ENCODE measurements at regions of chr1 and their contacts with region 1.

Region 1: DNA sequence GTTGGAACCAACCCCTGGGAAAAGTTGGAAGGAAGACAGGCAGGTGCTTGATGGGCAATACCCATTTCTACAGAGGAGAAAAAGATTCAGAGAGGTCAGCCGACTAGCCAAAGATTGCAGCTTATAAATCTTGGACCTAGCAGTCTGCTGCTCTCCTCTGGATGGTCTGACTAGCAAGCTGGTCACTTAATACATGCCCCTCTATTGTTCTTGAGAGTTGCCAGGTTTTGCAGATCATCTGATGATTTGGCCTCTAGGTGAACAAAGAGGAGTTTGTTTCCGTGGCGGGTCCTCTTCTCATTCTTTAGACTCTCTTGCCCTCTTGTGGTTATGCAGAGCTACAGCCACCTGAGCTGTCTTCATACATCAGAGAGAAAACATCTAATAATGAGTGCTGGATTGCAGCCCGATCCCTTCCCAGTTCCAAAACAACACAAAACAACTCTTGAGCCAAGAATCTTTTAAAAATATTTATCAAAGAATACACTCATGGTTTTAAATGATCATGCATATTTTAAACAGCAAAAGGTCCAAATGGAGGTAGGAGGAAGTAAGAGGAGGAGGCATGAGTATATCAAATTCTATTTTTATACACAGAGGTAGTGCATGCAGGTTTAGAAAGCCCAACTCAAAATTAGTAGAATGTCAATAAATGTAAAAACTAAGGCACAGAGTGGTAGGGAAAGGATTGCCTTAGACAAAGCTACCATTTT is 115.7 kb downstream of the SLC30A10 start:
- DNase-seq: no peak
- H3K4me3 Mint-ChIP-seq: no peak overlapping the region
- H3K27ac Mint-ChIP-seq: no peak overlapping the region
- H3K4me1 Mint-ChIP-seq: no peaks in the 10 kb centered on the region
- H3K27me3 Mint-ChIP-seq: peaks cover 8% of the 10 kb centered on the region

Region 2: DNA sequence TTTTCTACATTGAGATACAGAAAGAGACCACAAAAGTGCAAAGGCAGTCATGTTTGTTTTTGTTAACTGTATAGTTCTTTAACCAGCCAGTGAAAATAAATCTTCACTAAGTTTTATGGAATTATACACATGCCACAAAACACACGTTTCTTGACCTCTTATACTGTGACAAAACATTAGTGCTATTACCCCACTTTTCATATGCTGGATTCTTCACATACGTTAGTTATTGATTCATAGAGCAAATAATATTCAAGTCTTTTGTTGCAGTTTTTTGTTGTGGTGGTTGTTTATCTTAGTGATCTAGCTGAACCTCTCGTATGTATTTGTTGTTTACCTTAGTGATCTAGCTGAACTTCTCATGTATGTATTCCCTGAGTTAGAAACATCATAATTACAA is 611.0 kb before region 1 on chr1:
- intact Hi-C with region 1: loop called (anchors 5 kb)
- DNase-seq: no peak
- H3K4me3 Mint-ChIP-seq: no peak overlapping the region
- H3K27ac Mint-ChIP-seq: no peak overlapping the region
- H3K4me1 Mint-ChIP-seq: no peaks in the 10 kb centered on the region
- H3K27me3 Mint-ChIP-seq: no peaks in the 10 kb centered on the region